IMR-90 (cell line): ENCODE measurements at regions of chr7 and their contacts with region 1.

Region 1: GRCh38 chr7:112898432-112899290 is 108.5 kb upstream of the TMEM168 start:
- DNase-seq: peak; percentile 76
- ATAC-seq: peak; percentile 96
- H3K4me3 ChIP-seq: no peak overlapping the region
- H3K27ac ChIP-seq: no peak overlapping the region
- H3K4me1 ChIP-seq: no peaks in the 10 kb centered on the region
- H3K27me3 ChIP-seq: no peaks in the 10 kb centered on the region
- CTCF ChIP-seq: peak; percentile 88
- POLR2A ChIP-seq: no peak
- RAD21 ChIP-seq: peak; percentile 94

Region 2: DNA sequence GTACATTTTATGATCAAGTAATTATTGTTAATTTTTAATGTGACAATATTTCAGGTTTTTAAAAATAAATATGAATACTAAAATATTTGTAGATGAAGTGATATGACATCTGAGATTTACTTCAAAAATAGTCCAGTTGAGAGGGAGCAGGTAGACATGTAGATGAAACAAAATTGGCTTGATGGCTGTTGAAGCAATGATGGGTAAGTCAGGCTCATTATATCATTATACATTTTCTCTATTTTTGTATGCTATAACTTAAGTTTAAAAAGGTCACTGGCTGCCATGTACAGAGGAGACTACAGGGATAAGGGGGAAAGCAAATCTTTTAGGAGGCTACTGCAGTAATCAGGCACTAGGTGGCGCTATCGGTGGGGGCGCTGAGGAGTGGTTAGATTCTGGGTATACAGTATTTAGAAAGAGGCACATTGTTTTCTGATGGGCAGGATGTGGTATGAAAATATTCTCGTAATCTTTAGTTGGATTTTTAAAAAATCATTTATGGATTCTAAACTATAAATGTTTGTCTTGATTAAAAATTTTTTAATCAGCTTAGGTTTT is 1146.6 kb before region 1 on chr7:
- CTCF ChIA-PET with region 1: no interaction called
- POLR2A ChIA-PET with region 1: no interaction called
- dilution Hi-C with region 1: no loop called
- in situ Hi-C with region 1: loop called (anchors 25 kb)
- intact Hi-C with region 1: no loop called
- DNase-seq: peak; percentile 44
- ATAC-seq: peak; percentile 67
- H3K4me3 ChIP-seq: no peak overlapping the region
- H3K27ac ChIP-seq: no peak overlapping the region
- H3K4me1 ChIP-seq: peaks cover 2% of the 10 kb centered on the region; the same call in 1 of the 2 replicates
- H3K27me3 ChIP-seq: no peaks in the 10 kb centered on the region
- CTCF ChIP-seq: peak; percentile 80
- POLR2A ChIP-seq: no peak
- RAD21 ChIP-seq: peak; percentile 75

Region 3: GRCh38 chr7:112481833-112482670 is 416.6 kb before region 1 on chr7:
- CTCF ChIA-PET with region 1: no interaction called
- POLR2A ChIA-PET with region 1: no interaction called
- dilution Hi-C with region 1: no loop called
- in situ Hi-C with region 1: no loop called
- intact Hi-C with region 1: loop called (anchors 2 kb)
- DNase-seq: peak; percentile 86
- ATAC-seq: peak; percentile 69
- H3K4me3 ChIP-seq: no peak overlapping the region
- H3K27ac ChIP-seq: peak overlapping the region; percentile 31; the same call in 1 of the 2 replicates
- H3K4me1 ChIP-seq: peaks cover 4% of the 10 kb centered on the region; the same call in 1 of the 2 replicates
- H3K27me3 ChIP-seq: no peaks in the 10 kb centered on the region
- CTCF ChIP-seq: no peak
- POLR2A ChIP-seq: no peak
- RAD21 ChIP-seq: no peak

Region 4: GRCh38 chr7:112495810-112496462 is 402.7 kb before region 1 on chr7:
- CTCF ChIA-PET with region 1: no interaction called
- POLR2A ChIA-PET with region 1: no interaction called
- dilution Hi-C with region 1: no loop called
- in situ Hi-C with region 1: no loop called
- intact Hi-C with region 1: loop called (anchors 5 kb)
- DNase-seq: peak; percentile 64
- ATAC-seq: peak; percentile 85
- H3K4me3 ChIP-seq: no peak overlapping the region
- H3K27ac ChIP-seq: no peak overlapping the region
- H3K4me1 ChIP-seq: no peaks in the 10 kb centered on the region
- H3K27me3 ChIP-seq: no peaks in the 10 kb centered on the region
- CTCF ChIP-seq: peak; percentile 69
- POLR2A ChIP-seq: no peak
- RAD21 ChIP-seq: peak; percentile 72

Region 5: GRCh38 chr7:112665726-112666125 is 232.9 kb before region 1 on chr7:
- CTCF ChIA-PET with region 1: no interaction called
- POLR2A ChIA-PET with region 1: no interaction called
- dilution Hi-C with region 1: no loop called
- in situ Hi-C with region 1: no loop called
- intact Hi-C with region 1: loop called (anchors 5 kb)
- DNase-seq: peak; percentile 8
- ATAC-seq: peak; percentile 48; the same call in 1 of the 2 replicates
- H3K4me3 ChIP-seq: no peak overlapping the region
- H3K27ac ChIP-seq: no peak overlapping the region
- H3K4me1 ChIP-seq: no peaks in the 10 kb centered on the region
- H3K27me3 ChIP-seq: no peaks in the 10 kb centered on the region
- CTCF ChIP-seq: no peak
- POLR2A ChIP-seq: no peak
- RAD21 ChIP-seq: no peak